ENCODE measurements at regions of chr17 and their contacts with region 1.

Region 1: GRCh38 chr17:49556223-49556971 is 19.3 kb upstream of the NXPH3 start:
- DNase-seq: peak; percentile 75 to 86 (median 79)
- ATAC-seq: peak; percentile 91
- H3K4me3 ChIP-seq: no peak overlapping the region
- H3K4me1 ChIP-seq: no peaks in the 10 kb centered on the region
- CTCF ChIP-seq: peak; percentile 97

Region 2: GRCh38 chr17:49315551-49316257 is 240.7 kb before region 1 on chr17:
- intact Hi-C with region 1: loop called in 1 of 2 experiments (anchors 10 kb)
- DNase-seq: peak in 2 of 3 donors; percentile 69 to 87
- ATAC-seq: peak; percentile 100
- H3K4me3 ChIP-seq: no peak overlapping the region
- H3K4me1 ChIP-seq: peaks cover 6% of the 10 kb centered on the region
- CTCF ChIP-seq: peak; percentile 53

Region 3: DNA sequence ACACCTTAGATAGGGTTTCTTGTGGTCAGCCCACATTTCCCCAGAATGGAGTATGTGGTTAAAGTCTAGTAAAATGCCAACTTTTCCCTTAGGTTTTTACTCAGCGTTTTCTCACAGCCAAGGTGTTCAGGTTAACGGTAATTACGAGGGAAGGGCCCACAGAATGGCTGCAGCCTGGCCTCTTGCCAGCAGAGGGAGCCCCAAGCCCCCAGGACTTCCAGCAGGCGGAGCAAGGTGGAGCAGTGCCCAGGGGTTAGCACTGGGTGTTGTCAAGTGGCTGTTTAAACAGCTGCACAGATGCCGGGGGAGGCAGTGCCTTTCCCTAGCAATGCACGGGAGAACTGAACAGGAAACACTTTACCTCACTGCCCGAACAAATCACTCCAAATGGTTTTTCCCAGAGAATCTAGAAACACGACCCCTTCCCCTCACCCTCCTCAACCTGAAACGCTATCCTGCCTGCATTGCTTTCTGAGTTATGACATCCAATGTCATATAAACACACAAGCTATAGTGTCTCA is 148.4 kb before region 1 on chr17:
- intact Hi-C with region 1: loop called in 1 of 2 experiments (anchors 10 kb)
- DNase-seq: peak; percentile 90 to 94 (median 92)
- ATAC-seq: peak; percentile 94
- H3K4me3 ChIP-seq: no peak overlapping the region
- H3K4me1 ChIP-seq: peaks cover 20% of the 10 kb centered on the region
- CTCF ChIP-seq: peak; percentile 90

Region 4: DNA sequence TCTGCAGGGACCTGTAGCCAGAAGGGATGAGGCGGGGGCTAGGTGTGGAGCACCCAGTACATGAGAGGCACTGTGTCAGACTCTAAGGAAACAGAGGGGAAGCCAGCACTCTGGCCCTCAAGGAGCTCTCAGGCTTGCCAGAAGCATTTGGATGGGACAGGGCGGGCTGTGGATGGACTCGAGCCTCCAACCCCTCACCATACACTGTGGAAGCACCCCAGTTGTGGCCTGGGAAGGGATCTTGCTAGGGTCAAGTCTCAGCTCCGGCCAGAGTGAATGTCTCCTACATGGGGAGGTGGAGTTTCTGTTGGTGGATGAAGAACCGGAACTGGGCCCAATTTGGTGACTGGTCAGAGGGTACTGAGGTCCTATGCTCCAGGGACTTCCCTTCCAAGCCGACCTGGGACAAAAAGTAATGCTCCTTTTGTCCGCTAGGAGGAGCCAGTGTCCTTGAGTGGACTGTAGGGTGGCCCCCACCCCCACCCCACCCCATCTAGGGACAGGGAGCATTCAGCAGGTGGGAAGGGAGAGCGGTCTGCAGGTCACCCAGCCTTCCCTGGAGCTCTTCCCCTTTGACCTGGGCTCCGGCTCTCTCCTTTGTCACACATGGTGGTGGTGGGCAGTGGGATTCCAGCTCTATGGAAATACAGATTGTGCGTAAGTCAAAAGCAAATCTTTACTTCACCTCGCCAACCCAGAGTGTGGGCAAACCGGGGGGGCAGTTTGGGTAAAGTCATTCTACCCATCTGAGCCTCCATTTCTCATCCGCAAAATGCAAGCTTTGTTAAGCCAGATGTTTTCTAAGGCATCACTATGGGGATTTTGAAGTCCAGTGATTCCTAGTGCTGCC is 121.4 kb before region 1 on chr17:
- intact Hi-C with region 1: loop called (anchors 5 to 10 kb)
- DNase-seq: peak in 1 of 3 donors; percentile 66
- ATAC-seq: peak; percentile 58
- H3K4me3 ChIP-seq: no peak overlapping the region
- H3K4me1 ChIP-seq: no peaks in the 10 kb centered on the region
- CTCF ChIP-seq: peak; percentile 41

Region 5: GRCh38 chr17:49469831-49470810 is 86.3 kb before region 1 on chr17:
- intact Hi-C with region 1: no loop called
- DNase-seq: peak in 1 of 3 donors; percentile 12
- ATAC-seq: no peak
- H3K4me3 ChIP-seq: no peak overlapping the region
- H3K4me1 ChIP-seq: peaks cover 3% of the 10 kb centered on the region
- CTCF ChIP-seq: no peak

Region 6: DNA sequence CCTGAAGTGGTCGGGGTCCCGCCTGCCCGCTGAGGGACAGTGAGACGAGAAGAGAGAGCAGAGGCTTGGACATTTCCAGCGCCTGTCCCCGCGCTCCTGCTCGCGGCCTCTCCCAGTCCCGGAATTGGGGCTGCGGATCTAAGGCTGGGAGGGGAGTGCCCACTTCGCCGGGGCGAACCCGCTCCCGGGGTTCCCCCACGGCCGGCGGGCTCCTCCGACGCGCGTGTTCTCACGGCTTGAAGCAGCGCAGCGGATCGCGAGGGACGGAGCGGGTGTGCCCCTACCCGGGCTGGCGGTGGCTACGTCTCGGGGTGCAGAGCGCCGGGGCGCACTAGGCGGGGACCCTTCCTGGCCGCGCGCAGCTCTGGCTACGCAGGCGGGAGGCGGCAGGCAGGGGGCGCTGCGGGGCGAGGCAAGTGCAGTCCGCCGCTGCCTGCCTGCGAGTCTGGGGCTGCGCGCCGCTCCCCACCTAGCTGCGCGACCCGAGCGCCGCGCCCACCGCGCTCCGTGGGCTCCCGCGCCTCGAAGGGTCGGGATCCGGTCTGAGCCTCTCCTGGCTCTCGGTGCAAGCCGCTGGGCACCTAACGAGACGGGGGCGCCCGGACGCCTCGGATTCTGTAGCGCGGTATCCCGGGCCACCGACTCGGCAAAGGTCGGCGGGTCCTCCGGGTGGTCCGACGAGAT is 60.1 kb before region 1 on chr17:
- intact Hi-C with region 1: loop called in 1 of 2 experiments (anchors 10 kb)
- DNase-seq: peak; percentile 69 to 87 (median 81)
- ATAC-seq: peak; percentile 84
- H3K4me3 ChIP-seq: no peak overlapping the region
- H3K4me1 ChIP-seq: peaks cover 22% of the 10 kb centered on the region
- CTCF ChIP-seq: peak; percentile 92

Measured in mucosa of descending colon (tissue), 3 donors.